ENCODE measurements at regions of chr6 and their contacts with region 1.

Region 1: DNA sequence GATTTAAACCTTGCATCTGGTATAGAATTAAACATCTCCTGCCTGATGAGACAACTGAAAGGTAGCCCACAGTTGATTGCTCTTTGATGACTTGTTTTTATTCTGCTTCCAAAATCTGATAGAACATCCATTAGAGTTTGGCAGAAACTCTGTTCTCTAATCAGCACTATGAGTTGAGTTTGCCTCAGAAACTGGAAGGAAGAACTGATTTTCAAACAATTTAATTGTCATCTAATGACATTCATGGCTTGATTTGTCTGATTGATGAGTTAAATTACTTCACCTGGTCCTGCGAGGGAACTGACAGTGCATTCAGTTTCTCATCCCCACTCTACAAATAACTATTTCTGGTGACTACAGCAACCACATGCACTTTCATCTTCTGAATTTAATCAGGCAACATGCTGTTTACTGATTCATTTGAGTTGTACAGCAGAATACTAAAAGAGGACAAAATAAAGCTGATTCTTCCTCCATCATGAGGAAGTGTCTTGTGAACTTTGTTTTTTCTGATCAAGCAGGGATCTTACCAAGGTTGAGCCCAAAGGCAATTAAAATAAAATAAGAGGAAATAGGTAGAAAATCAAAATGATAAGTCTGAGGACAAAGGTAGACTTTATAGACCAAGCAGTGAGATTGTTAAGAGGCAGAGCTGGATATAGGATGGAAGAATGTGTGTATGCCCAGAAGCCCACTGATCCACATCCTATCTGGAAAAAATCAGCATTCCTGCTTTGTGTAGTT is 15.7 kb upstream of the MRAP2 start:
- DNase-seq: no peak
- ATAC-seq: no peak
- H3K4me3 ChIP-seq: no peak overlapping the region
- H3K27ac ChIP-seq: no peak overlapping the region
- H3K4me1 ChIP-seq: no peaks in the 10 kb centered on the region
- H3K27me3 ChIP-seq: peaks cover 0 to 2% (median 0%) of the 10 kb centered on the region in 3 donors
- CTCF ChIP-seq: no peak
- POLR2A ChIP-seq: no peak

Region 2: GRCh38 chr6:84033523-84034451 is 15.9 kb after region 1 on chr6 and contains the start of gene MRAP2:
- in situ Hi-C with region 1: no loop called
- intact Hi-C with region 1: no loop called
- DNase-seq: no peak
- ATAC-seq: peak in 1 of 2 donors; percentile 16
- H3K4me3 ChIP-seq: peak within 1 kb of the TSS; percentile 51 to 58 (median 56)
- H3K27ac ChIP-seq: no peak within 1 kb of the TSS
- H3K4me1 ChIP-seq: peaks cover 0 to 3% of the 10 kb centered on the region in 2 donors
- H3K27me3 ChIP-seq: peaks cover 0 to 18% (median 3%) of the 10 kb centered on the region in 3 donors
- CTCF ChIP-seq: no peak
- POLR2A ChIP-seq: no peak
- total RNA-seq, gene MRAP2: 0.29 TPM in 1 of 4 donors, not detected in the others

Region 3: DNA sequence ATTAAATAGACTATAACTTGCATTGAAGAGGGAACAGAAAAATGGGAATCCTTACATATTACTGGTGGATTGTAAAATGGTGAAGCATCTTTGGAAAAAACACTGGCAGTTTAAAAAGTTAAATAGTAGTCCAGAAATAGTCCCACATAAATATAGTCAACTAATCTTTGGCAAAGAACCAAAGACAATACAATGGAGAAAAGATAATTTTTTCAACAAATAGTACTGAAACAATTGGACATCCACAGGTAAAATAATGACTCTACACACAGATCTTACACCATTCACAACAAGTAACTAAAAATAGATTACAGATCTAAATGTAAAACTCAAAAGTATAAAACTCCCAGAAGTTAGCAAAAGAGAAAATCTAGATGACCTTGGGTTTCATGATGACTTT is 468.6 kb after region 1 on chr6:
- in situ Hi-C with region 1: no loop called
- intact Hi-C with region 1: loop called (anchors 10 kb)
- DNase-seq: no peak
- ATAC-seq: no peak
- H3K4me3 ChIP-seq: no peak overlapping the region
- H3K27ac ChIP-seq: no peak overlapping the region
- H3K4me1 ChIP-seq: no peaks in the 10 kb centered on the region
- H3K27me3 ChIP-seq: no peaks in the 10 kb centered on the region
- CTCF ChIP-seq: no peak
- POLR2A ChIP-seq: no peak